Activated CD4-positive, alpha-beta T cell treated with anti-CD3 and anti-CD28 coated beads, Interleukin-2, amount 10 ng/mL, durations not matched to agents 24 days and 14 days (primary cell): ENCODE measurements at regions of chr9 and their contacts with region 1.

Region 1: DNA sequence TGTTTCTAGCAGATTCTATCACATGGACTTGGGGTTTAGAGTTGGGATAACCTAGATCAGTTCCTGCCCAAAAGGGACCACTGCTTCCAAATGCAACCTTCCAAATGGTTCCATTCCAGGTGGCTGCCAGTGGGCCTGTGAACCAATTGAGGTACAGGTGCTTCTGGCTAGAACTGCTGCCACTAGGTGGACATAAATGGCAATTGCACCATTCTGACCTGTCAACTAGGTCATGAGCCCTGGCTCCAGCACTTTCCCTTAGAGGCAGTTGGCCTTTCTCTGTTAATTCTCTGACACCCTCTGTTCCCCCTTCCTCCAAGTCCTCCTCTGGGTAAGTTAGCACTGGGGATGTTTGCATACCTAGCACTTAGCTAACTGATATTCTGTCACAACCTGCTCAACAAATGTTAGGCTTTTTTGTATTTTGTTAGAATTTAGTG is 16.6 kb upstream of the HEMGN start:
- DNase-seq: peak; percentile 87
- H3K4me3 Mint-ChIP-seq: no peak overlapping the region
- H3K27ac Mint-ChIP-seq: no peak overlapping the region
- H3K4me1 Mint-ChIP-seq: peaks cover 10% of the 10 kb centered on the region
- H3K27me3 Mint-ChIP-seq: peaks cover 8% of the 10 kb centered on the region

Region 2: DNA sequence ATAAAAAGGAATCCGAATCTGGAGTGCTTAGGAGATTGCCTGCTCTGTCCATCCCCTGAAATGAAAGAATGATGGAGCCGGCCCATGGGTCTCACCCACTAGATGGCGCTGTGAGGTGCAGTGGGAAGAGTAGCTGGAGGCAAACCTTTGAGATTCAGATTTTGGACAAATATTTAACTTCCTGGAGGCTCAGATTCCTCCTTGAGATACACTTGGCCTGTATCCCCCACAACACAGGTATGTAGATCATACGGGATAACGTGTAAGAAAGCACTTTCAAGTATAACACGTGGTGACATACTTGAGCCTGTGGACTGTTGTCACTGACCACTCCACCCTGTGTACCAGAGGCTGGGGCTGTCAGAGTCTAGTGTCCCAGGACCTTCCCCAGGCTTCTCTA is 64.5 kb before region 1 on chr9:
- intact Hi-C with region 1: loop called (anchors 5 kb)
- DNase-seq: peak; percentile 91
- H3K4me3 Mint-ChIP-seq: no peak overlapping the region
- H3K27ac Mint-ChIP-seq: no peak overlapping the region
- H3K4me1 Mint-ChIP-seq: peaks cover 6% of the 10 kb centered on the region
- H3K27me3 Mint-ChIP-seq: peaks cover 3% of the 10 kb centered on the region